ENCODE measurements at regions of chr15 and their contacts with region 1.

Region 1: GRCh38 chr15:50051803-50052419 is 67.1 kb downstream of the ATP8B4 start:
- DNase-seq: peak; percentile 29
- H3K4me3 Mint-ChIP-seq: no peak overlapping the region
- H3K27ac Mint-ChIP-seq: peak overlapping the region; percentile 44
- H3K4me1 Mint-ChIP-seq: peaks cover 49% of the 10 kb centered on the region
- H3K27me3 Mint-ChIP-seq: no peaks in the 10 kb centered on the region

Region 2: DNA sequence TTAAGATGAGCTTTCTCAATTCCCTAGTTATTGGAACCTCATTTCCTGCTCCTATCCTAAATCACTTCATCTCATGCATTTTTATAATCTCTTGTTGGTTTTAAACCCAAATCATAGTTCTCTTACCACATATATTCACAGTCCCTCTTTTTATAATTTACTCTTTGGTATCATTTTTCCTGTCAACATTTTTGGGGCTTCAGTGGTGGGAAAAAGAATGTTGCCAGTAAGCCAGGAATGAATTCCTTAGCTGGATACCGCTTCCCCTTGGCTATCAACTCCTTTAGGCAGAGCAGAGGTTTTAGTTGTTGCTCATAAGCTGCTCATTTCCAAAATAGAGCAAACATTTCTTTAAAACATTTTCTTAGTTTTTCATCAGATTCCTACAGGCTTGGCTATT is 769.5 kb before region 1 on chr15:
- intact Hi-C with region 1: loop called (anchors 2 kb)
- DNase-seq: no peak
- H3K4me3 Mint-ChIP-seq: no peak overlapping the region
- H3K27ac Mint-ChIP-seq: no peak overlapping the region
- H3K4me1 Mint-ChIP-seq: peaks cover 24% of the 10 kb centered on the region
- H3K27me3 Mint-ChIP-seq: no peaks in the 10 kb centered on the region

Region 3: GRCh38 chr15:49876401-49877038 is 175.4 kb before region 1 on chr15:
- intact Hi-C with region 1: loop called (anchors 2 kb)
- DNase-seq: no peak
- H3K4me3 Mint-ChIP-seq: no peak overlapping the region
- H3K27ac Mint-ChIP-seq: peak overlapping the region; percentile 22
- H3K4me1 Mint-ChIP-seq: peaks cover 17% of the 10 kb centered on the region
- H3K27me3 Mint-ChIP-seq: no peaks in the 10 kb centered on the region

Region 4: GRCh38 chr15:50003786-50004334 is 48.1 kb before region 1 on chr15:
- intact Hi-C with region 1: loop called (anchors 10 kb)
- DNase-seq: peak; percentile 59
- H3K4me3 Mint-ChIP-seq: no peak overlapping the region
- H3K27ac Mint-ChIP-seq: peak overlapping the region; percentile 40
- H3K4me1 Mint-ChIP-seq: peaks cover 15% of the 10 kb centered on the region
- H3K27me3 Mint-ChIP-seq: no peaks in the 10 kb centered on the region